ENCODE measurements at regions of chr6 and their contacts with region 1.

Region 1: DNA sequence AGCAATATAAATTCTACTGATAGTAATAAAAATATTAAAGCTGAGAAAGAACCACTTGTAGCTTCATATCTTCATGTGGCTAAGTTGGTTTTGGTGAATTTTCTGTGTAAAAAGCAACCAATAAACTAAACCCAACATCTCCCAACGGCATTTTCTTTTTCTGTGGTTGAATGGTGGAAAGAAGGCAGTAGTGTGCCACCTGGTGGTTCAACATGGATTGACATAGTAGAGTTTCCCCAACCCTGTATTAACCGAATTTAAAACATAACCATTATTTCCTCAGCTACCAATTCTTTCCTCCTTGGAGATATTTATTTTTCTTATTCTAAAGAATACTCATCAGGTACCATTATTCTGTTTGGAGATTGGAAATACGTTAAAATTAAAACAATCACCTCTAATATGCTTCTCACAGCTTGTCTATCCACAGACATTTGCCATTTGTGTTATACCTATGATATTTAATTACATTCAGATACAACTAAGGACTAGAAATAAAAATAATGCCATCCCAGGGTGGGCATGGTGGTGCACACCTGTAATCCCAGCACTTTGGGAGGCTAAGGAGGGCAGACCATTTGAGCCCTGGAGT is 117.1 kb upstream of the EEF1E1 start:
- DNase-seq: no peak
- ATAC-seq: peak; percentile 57
- H3K4me3 Mint-ChIP-seq: no peak overlapping the region
- H3K27ac Mint-ChIP-seq: no peak overlapping the region
- H3K4me1 Mint-ChIP-seq: no peaks in the 10 kb centered on the region
- H3K27me3 Mint-ChIP-seq: peaks cover 5% of the 10 kb centered on the region
- CTCF ChIP-seq: no peak

Region 2: DNA sequence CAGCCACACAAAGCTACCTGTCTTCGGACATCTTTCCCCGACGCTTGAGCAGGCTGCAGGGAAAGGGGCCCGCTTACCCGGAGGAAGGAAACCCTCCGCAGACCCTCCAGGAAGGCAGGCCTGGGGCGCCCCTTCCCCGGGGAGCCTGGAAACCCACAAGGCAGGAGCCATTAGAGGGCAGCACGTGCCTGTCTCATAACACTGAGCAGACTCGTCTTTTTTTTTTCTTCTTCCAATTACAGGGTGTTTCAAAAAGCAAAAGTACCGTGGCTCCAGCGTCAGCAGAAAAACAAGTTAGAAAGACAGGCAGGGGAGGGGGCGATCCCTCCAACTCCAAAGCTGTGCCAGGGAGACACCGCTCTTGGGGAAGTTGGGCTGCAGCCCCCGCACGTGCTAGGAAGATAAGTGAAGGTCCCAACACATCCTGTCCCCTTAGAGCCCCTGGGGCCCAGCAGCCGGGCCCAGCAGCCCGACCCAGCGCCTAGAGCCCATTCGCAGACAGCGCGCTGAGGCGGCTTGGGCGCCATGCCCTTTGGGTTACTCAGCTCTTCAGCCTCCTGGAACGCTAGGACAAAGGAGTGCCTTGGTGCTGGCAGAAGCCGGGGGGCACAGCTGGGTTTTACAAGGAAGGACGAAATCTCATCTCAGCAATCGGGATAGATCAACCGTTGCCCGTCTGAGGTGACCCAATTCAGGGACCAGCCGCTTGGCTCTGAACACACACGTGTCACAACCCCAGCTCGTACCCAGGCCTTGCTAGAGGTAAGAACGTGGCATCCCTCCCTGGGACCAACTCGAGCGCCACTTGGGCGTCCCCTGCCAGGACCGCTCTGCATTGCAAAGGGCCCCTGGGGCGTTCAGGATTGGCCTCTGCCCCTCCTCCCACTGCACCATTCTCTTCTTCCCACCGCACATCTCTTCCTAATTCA is 1494.6 kb before region 1 on chr6:
- CTCF ChIA-PET with region 1: no interaction called
- POLR2A ChIA-PET with region 1: no interaction called
- intact Hi-C with region 1: loop called (anchors 5 kb)
- DNase-seq: peak; percentile 40
- ATAC-seq: peak; percentile 84
- H3K4me3 Mint-ChIP-seq: peak overlapping the region; percentile 65
- H3K27ac Mint-ChIP-seq: no peak overlapping the region
- H3K4me1 Mint-ChIP-seq: peaks cover 8% of the 10 kb centered on the region
- H3K27me3 Mint-ChIP-seq: peaks cover 23% of the 10 kb centered on the region
- CTCF ChIP-seq: no peak

Region 3: DNA sequence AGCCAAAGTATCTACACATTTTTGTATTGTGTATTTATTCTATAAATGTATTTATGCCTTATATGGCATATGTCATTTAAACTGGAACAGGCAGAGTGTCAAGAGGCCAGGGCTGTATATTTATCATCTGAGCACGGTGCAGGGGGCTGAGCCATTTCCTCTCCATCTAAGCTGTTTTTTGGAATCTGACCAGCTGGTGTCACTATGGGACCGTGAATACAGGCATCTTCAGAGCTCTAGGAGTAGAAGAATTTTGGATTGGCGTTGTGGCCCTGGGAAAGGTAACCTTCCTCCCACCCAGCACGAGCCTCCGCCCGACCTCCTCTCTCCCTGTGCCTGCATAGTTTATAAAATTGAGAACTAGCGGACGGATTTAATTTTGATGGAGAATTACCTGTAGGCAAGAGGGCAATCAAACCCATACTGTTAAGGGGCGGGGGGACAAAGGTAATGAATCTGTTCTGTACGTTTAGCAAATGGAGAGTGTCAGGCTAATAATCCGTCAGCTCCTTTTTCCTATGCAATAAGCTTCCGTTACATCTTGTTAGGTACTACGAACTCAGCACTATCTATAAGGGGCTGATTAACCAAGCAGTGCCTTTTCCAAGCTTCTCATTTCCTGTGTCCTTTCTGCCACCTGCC is 88.1 kb before region 1 on chr6:
- CTCF ChIA-PET with region 1: interaction called, 28 read pairs
- POLR2A ChIA-PET with region 1: no interaction called
- intact Hi-C with region 1: loop called (anchors 1 kb)
- DNase-seq: no peak
- ATAC-seq: peak; percentile 25
- H3K4me3 Mint-ChIP-seq: no peak overlapping the region
- H3K27ac Mint-ChIP-seq: no peak overlapping the region
- H3K4me1 Mint-ChIP-seq: no peaks in the 10 kb centered on the region
- H3K27me3 Mint-ChIP-seq: peaks cover 9% of the 10 kb centered on the region
- CTCF ChIP-seq: no peak

Measured in activated B cell treated with CpG ODN at 0.5 μM for 24 hours (primary cell).